ENCODE measurements at regions of chr3 and their contacts with region 1.

Region 1: DNA sequence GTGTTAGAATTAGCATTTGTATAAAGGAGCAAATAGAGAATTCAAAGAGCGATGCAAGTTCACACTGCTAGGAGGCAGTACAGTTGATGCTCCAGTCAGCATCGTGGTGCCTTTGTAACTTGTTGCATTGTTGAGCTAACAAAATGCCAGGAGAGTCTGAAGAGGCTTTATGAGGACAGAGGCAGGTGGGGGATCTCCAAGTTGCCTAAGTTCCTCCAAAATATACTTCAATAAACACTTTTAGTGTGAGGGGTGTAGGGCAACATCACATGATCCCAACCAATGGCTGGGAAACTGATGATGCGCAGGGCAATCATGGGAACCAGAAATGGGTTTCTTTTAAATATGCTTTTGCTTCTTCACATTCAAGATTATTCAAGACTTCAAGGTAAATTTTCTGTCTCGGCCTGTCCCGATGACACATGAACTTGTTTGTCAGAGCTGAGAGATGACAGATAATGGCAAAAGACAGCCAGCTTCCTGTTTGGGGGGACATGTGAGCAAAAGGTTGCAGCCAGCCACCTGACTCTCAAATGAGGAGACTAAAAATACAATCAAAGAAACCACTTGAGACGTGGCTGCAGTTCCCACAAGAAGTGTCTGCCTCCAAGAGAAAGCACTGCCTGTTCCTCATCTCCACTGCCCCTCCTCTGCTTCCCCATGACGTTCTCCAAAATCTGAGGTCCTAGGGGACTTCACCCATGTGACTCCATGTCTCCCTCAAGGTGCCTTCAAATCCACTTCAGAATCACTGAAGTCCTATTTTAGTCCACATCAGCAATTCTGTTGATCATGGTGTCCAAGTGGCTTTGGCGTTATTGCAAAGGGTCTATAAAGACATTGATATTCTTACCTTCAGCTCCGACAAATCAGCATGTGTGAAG is 39.3 kb downstream of the KLHL6 start:
- DNase-seq: no peak
- ATAC-seq: peak; percentile 37; the same call in 2 of the 3 replicates
- H3K4me3 ChIP-seq: no peak overlapping the region
- H3K27ac ChIP-seq: no peak overlapping the region
- H3K4me1 ChIP-seq: peaks cover 9 to 36% of the 10 kb centered on the region in 2 experiments; a peak in 4 of 5 replicates
- H3K27me3 ChIP-seq: no peaks in the 10 kb centered on the region; a peak in 1 of 5 replicates
- CTCF ChIP-seq: peak in 2 of 3 experiments; percentile 16 to 22; a peak in 1 of 6 replicates
- EP300 ChIP-seq: no peak
- POLR2A ChIP-seq: no peak
- RAD21 ChIP-seq: no peak

Region 2: GRCh38 chr3:183527428-183528379 is 11.5 kb after region 1 on chr3:
- CTCF ChIA-PET with region 1: no interaction called
- POLR2A ChIA-PET with region 1: interaction called, 10 read pairs
- in situ Hi-C with region 1: no loop called
- intact Hi-C with region 1: no loop called
- DNase-seq: no peak
- ATAC-seq: no peak
- H3K4me3 ChIP-seq: no peak overlapping the region
- H3K27ac ChIP-seq: no peak overlapping the region
- H3K4me1 ChIP-seq: peaks cover 0 to 5% of the 10 kb centered on the region in 2 experiments; a peak in 4 of 5 replicates
- H3K27me3 ChIP-seq: no peaks in the 10 kb centered on the region
- CTCF ChIP-seq: no peak
- EP300 ChIP-seq: no peak
- POLR2A ChIP-seq: no peak
- RAD21 ChIP-seq: no peak